Activated CD4-positive, alpha-beta T cell treated with anti-CD3 and anti-CD28 coated beads for 36 hours (primary cell): ENCODE measurements at regions of chr2 and their contacts with region 1.

Region 1: GRCh38 chr2:230411570-230412370 is 4.2 kb upstream of the SP100 start:
- DNase-seq: peak; percentile 76
- ATAC-seq: peak; percentile 66
- H3K4me3 Mint-ChIP-seq: peak overlapping the region; percentile 85
- H3K27ac Mint-ChIP-seq: peak overlapping the region; percentile 96
- H3K4me1 Mint-ChIP-seq: peaks cover 60% of the 10 kb centered on the region
- H3K27me3 Mint-ChIP-seq: no peaks in the 10 kb centered on the region

Region 2: DNA sequence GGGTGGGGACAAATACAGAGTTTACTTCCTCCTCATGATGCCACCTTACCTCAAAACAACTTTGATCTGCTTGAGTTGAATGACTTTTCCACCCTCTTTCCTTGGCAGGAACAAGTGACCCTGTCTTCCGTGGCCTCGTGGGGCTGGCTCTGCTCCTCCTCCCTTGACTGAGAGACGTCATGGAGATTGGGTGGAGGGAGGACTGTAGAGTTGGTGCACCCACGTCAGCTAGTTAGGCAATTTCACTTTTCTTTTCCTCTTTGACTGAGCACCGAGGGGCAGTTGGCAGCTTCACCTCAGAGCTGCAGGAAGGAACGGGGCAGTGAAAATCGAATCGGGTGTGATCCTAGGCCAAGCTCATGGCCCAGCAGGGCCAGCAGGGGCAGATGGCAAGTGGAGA is 186.3 kb before region 1 on chr2 and contains the start of gene SP140:
- CTCF ChIA-PET with region 1: interaction called, 4 read pairs
- POLR2A ChIA-PET with region 1: no interaction called
- intact Hi-C with region 1: loop called in 1 of 2 experiments (anchors 2 kb)
- DNase-seq: peak; percentile 85
- ATAC-seq: peak; percentile 87
- H3K4me3 Mint-ChIP-seq: peak within 1 kb of the TSS; percentile 81
- H3K27ac Mint-ChIP-seq: peak within 1 kb of the TSS; percentile 96
- H3K4me1 Mint-ChIP-seq: peaks cover 51% of the 10 kb centered on the region
- H3K27me3 Mint-ChIP-seq: no peaks in the 10 kb centered on the region
- total RNA-seq, gene SP140: 71.3 to 84.2 TPM

Region 3: DNA sequence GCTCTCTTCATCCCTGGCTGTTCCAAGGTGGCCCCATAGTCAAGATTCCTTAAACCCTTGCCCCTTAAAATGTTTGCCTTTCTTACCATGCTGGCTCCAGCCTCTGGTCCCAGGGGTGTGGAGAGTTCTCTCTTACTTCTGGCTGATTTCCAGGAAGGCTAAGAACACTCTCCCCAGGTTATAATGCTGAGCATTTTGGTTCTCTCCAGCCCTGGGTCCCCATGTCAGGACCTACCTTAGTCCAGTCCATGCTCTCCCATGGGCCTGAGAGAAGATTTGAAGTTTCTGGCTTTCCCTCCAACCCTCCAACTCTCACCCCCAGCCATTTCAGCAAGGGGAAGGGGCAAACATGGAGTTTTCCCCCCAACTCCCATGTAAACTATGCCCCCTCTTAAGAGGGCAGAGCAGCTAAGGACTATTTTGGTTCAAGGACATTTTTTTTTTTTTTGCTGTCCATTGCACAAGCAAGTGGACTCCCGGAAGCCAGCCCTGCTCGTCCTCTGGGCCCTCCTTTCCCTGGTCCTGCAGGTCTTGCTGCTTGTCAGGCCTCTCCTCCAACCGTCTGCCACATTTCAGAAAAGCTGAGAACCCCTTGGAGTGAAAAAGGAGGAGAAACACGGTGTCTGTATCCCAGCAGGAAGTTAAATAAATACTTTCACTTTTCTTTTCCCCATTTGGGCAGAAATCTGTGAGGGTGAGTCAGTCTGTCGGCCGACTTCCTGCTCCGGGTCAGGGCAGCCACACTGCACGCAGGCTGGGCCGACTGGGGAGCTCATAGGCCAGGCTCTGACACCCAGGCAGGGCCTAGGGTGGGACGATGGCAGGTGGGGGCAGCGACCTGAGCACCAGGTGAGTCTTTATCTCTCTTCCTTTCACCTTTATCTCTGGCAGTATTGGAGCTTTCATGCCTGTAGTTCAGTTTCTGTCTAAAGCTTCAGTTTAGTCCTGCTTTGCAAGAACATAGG is 85.0 kb before region 1 on chr2 and contains the start of gene SP140L:
- CTCF ChIA-PET with region 1: no interaction called
- POLR2A ChIA-PET with region 1: no interaction called
- intact Hi-C with region 1: loop called (anchors 1 to 2 kb)
- DNase-seq: peak; percentile 89
- ATAC-seq: peak; percentile 97
- H3K4me3 Mint-ChIP-seq: peak within 1 kb of the TSS; percentile 89
- H3K27ac Mint-ChIP-seq: peak within 1 kb of the TSS; percentile 98
- H3K4me1 Mint-ChIP-seq: peaks cover 61% of the 10 kb centered on the region
- H3K27me3 Mint-ChIP-seq: no peaks in the 10 kb centered on the region
- total RNA-seq, gene SP140L: 40.1 to 43.4 TPM

Region 4: DNA sequence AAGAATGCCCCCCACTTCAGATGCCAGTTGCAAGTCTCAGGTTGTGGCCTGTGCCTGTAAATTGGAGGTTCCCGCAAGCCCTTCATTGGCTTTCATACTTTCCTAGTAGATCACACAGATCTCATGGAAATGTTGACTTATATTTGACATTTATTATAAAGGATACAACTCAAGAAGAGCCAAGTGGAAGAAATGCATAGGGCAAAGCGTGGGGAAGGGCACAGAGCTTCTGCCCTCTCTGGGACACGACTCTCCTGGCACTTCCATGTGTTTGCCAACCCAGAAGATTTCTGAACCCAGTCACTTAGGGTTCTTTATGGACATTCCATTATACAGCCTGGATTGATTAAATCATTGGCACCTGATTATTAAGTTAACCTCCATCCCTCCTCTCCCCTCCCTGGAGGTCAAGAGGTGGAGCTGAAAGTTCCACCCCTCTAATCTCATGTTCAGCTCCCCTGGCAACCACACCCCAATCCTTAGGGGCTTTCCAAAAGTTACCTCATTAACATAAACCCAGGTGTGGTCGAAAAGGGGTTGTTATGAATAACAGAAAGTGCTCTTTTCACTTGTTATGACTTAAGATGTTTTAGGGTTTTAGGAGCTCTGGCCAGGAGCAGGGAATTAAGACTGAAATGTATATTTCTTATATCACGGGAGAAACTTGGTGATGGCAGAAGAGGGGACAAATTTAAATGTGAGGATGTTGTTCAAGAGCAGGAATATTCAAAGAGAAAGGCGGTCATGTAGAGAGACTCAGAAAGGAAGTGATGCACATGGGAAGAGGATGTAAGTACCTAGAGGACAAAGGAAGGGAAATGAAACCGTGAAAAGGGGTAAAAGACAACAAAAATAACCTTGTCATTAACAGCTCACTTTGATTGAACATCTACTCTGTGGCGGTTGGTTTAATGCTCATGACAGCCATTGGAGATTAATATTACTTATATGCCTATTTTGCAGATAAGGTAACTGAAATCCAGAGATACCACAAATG is 36.0 kb after region 1 on chr2:
- CTCF ChIA-PET with region 1: no interaction called
- POLR2A ChIA-PET with region 1: no interaction called
- intact Hi-C with region 1: loop called in 1 of 2 experiments (anchors 1 kb)
- DNase-seq: peak; percentile 58
- ATAC-seq: peak; percentile 88
- H3K4me3 Mint-ChIP-seq: peak overlapping the region; percentile 22
- H3K27ac Mint-ChIP-seq: peak overlapping the region; percentile 87
- H3K4me1 Mint-ChIP-seq: peaks cover 64% of the 10 kb centered on the region
- H3K27me3 Mint-ChIP-seq: no peaks in the 10 kb centered on the region